ENCODE measurements at regions of chr3 and their contacts with region 1.

Region 1: DNA sequence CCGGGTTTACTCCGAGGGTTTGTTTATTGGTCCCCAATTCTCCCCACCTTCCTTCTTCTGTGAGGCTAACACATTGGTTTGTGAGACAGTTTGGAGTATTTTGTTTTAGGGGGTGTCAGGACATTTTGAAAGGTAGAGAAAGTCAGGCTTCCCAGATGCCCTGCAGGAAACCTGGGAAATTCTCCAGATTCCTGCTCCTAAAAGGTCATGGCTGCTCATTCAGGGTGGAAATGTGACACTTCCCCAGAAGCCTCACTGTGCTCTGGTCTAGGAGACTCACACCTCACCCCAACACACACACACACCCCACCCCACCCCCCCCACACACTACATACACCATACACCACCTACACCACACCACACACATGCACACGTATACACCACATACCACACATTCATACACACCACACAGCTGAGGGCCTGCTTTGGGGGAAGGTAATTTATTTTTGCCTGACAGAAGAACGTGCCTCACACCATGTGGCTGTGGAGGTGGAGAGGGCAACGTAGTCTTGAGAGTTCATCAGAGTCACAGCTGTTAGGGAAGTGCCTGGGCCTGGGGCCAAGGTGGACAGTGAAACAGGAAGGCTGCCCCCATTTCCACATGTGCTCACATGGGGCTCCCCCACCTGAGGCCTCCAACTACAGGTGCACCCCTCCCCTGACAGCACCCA is 40.4 kb upstream of the LIMD1 start:
- DNase-seq: peak; percentile 86 to 93
- ATAC-seq: peak; percentile 48 to 55
- H3K4me3 ChIP-seq: no peak overlapping the region
- H3K27ac ChIP-seq: peak overlapping the region; percentile 85 to 90 (median 87)
- H3K4me1 ChIP-seq: peaks cover 87 to 88% of the 10 kb centered on the region in 2 donors
- H3K27me3 ChIP-seq: no peaks in the 10 kb centered on the region
- CTCF ChIP-seq: no peak
- POLR2A ChIP-seq: no peak

Region 2: DNA sequence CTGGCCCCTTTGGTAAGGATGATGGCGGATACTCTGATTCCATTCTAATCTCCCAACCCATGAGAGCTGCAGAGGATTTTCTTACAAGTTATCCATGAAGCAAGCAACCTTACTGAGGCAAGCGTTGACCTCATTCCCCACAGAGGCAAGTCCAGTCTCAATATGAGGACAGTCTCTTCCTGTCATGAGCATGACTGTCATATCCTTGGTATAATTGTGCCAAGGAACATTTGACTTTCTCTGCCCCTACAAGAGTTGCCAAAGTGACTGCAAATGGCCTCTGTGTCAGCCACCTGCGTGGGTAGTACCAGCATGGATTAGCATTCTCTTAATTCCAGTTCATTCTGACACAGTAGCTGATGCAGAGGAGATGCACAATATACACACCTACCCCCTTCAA is 256.8 kb before region 1 on chr3:
- in situ Hi-C with region 1: no loop called
- intact Hi-C with region 1: no loop called
- DNase-seq: no peak
- ATAC-seq: no peak
- H3K4me3 ChIP-seq: no peak overlapping the region
- H3K27ac ChIP-seq: no peak overlapping the region
- H3K4me1 ChIP-seq: no peaks in the 10 kb centered on the region
- H3K27me3 ChIP-seq: no peaks in the 10 kb centered on the region
- CTCF ChIP-seq: no peak
- POLR2A ChIP-seq: no peak

Region 3: GRCh38 chr3:45995236-45996192 is 441.4 kb after region 1 on chr3 and contains the start of gene FYCO1:
- in situ Hi-C with region 1: no loop called
- intact Hi-C with region 1: loop called (anchors 10 kb)
- DNase-seq: peak; percentile 95 to 96
- ATAC-seq: peak; percentile 66 to 69
- H3K4me3 ChIP-seq: peak within 1 kb of the TSS; percentile 83 to 98 (median 94)
- H3K27ac ChIP-seq: peak within 1 kb of the TSS; percentile 97 to 100 (median 100)
- H3K4me1 ChIP-seq: peaks cover 47 to 50% of the 10 kb centered on the region in 2 donors
- H3K27me3 ChIP-seq: no peaks in the 10 kb centered on the region
- CTCF ChIP-seq: peak in 1 of 5 experiments; percentile 7
- POLR2A ChIP-seq: peak; percentile 91 to 94
- total RNA-seq, gene FYCO1: 47.4 to 99.8 (median 84.2) TPM

Measured in gastrocnemius medialis (tissue), 4 donors.